MCF 10A (cell line): ENCODE measurements at regions of chr4 and their contacts with region 1.

Region 1: DNA sequence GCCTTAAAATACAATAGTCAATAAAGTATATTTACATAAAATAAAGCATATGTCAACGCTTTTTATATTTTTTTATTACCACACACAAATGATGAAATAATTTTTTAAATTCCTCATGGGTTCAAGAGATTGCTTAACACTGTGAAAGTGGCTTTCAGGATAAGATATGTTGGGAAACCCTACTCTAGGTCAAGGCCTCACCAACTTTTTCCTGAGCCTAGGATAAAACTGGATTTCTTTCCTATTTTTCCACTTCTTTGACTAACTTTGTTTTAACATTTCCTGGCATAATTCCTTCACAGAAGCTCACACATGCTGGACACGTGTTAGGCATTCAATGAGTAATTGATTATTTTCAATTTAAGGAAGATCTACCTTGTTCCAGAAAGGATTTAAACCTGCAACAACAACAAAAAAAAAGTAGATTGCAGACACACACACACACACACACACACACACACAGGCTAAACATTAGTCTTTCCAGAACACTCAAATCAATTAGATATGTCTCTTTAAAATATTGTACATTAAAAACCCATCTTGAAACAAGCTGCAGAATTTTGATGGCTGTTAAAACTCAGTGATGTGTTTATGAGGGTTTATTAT is 9.1 kb downstream of the KLB start:
- DNase-seq: peak; percentile 32
- H3K4me3 Mint-ChIP-seq: no peak overlapping the region
- H3K27ac Mint-ChIP-seq: no peak overlapping the region
- H3K4me1 Mint-ChIP-seq: no peaks in the 10 kb centered on the region
- H3K27me3 Mint-ChIP-seq: no peaks in the 10 kb centered on the region
- CTCF ChIP-seq: no peak

Region 2: GRCh38 chr4:39427520-39428114 is 11.8 kb after region 1 on chr4:
- CTCF ChIA-PET with region 1: interaction called, 4 read pairs
- POLR2A ChIA-PET with region 1: interaction called, 10 read pairs
- intact Hi-C with region 1: no loop called
- DNase-seq: no peak
- H3K4me3 Mint-ChIP-seq: no peak overlapping the region
- H3K27ac Mint-ChIP-seq: no peak overlapping the region
- H3K4me1 Mint-ChIP-seq: no peaks in the 10 kb centered on the region
- H3K27me3 Mint-ChIP-seq: no peaks in the 10 kb centered on the region
- CTCF ChIP-seq: no peak

Region 3: DNA sequence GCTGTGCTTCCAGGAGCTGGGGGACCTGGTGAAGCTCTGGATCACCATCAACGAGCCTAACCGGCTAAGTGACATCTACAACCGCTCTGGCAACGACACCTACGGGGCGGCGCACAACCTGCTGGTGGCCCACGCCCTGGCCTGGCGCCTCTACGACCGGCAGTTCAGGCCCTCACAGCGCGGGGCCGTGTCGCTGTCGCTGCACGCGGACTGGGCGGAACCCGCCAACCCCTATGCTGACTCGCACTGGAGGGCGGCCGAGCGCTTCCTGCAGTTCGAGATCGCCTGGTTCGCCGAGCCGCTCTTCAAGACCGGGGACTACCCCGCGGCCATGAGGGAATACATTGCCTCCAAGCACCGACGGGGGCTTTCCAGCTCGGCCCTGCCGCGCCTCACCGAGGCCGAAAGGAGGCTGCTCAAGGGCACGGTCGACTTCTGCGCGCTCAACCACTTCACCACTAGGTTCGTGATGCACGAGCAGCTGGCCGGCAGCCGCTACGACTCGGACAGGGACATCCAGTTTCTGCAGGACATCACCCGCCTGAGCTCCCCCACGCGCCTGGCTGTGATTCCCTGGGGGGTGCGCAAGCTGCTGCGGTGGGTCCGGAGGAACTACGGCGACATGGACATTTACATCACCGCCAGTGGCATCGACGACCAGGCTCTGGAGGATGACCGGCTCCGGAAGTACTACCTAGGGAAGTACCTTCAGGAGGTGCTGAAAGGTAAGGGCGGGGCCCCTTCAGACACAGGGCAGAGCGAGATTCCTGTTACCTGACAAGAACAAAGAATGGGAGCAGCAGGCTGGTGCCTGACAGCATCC is 31.2 kb after region 1 on chr4:
- CTCF ChIA-PET with region 1: no interaction called
- POLR2A ChIA-PET with region 1: no interaction called
- intact Hi-C with region 1: no loop called
- DNase-seq: no peak
- H3K4me3 Mint-ChIP-seq: no peak overlapping the region
- H3K27ac Mint-ChIP-seq: no peak overlapping the region
- H3K4me1 Mint-ChIP-seq: no peaks in the 10 kb centered on the region
- H3K27me3 Mint-ChIP-seq: no peaks in the 10 kb centered on the region
- CTCF ChIP-seq: no peak

Region 4: GRCh38 chr4:39469429-39470077 is 53.8 kb after region 1 on chr4:
- CTCF ChIA-PET with region 1: no interaction called
- POLR2A ChIA-PET with region 1: no interaction called
- intact Hi-C with region 1: no loop called
- DNase-seq: peak; percentile 80
- H3K4me3 Mint-ChIP-seq: no peak overlapping the region
- H3K27ac Mint-ChIP-seq: no peak overlapping the region
- H3K4me1 Mint-ChIP-seq: peaks cover 13% of the 10 kb centered on the region
- H3K27me3 Mint-ChIP-seq: no peaks in the 10 kb centered on the region
- CTCF ChIP-seq: peak; percentile 71